ENCODE measurements at regions of chrX and their contacts with region 1.

Region 1: GRCh38 chrX:24693453-24694202 is at the start of gene POLA1:
- DNase-seq: peak; percentile 33 to 81 (median 41)
- ATAC-seq: peak; percentile 97
- H3K4me3 ChIP-seq: peak within 1 kb of the TSS; percentile 78
- H3K4me3 Mint-ChIP-seq: peak within 1 kb of the TSS; percentile 85 to 94 (median 89)
- H3K27ac ChIP-seq: peak within 1 kb of the TSS; percentile 52
- H3K27ac Mint-ChIP-seq: peak within 1 kb of the TSS; percentile 28 to 95 (median 77)
- H3K4me1 ChIP-seq: no peaks in the 10 kb centered on the region
- H3K4me1 Mint-ChIP-seq: peaks cover 0 to 24% (median 13%) of the 10 kb centered on the region in 7 donors
- H3K27me3 ChIP-seq: no peaks in the 10 kb centered on the region
- H3K27me3 Mint-ChIP-seq: no peaks in the 10 kb centered on the region
- total RNA-seq, gene POLA1: 6.4 to 26.6 (median 7.5) TPM

Region 2: DNA sequence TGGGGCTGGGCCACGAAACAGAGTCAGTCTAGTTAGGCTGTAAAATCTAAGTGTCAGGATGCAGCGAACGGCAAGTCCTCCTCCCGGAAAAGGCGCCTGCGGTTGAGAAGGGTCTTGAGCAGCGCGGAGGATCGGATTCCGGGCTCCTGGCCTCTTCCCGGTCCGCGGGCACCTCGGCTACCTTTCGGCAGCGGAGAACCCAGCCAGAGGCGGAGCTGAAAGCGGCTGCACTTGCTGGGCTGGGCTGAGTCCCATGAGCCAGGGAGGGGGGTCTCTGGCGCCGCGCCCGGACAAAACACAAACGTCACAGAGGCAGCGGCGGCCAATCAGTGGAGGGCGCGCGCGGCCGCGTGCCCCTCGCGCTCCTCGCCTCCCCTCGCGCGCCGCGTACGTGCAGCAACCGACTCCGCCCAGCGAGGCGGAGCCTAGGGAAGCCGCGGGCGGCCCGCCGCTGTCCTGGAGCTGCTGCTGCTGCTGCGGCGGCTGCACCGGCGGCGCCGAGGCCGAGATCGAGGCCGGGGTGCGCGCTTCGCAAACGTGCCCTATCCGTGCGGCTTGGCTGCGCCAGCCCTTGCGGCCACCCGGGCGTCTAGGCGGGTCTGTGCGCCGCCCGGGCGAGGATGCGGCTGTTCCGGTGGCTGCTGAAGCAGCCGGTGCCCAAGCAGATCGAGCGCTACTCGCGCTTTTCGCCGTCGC is 228.6 kb before region 1 on chrX and contains the start of gene PDK3:
- CTCF ChIA-PET with region 1: no interaction called
- POLR2A ChIA-PET with region 1: no interaction called
- intact Hi-C with region 1: loop called in 1 of 2 experiments (anchors 5 kb)
- DNase-seq: peak; percentile 81 to 92 (median 89)
- ATAC-seq: peak; percentile 98
- H3K4me3 ChIP-seq: peak within 1 kb of the TSS; percentile 70
- H3K4me3 Mint-ChIP-seq: peak within 1 kb of the TSS; percentile 48 to 90 (median 85)
- H3K27ac ChIP-seq: peak within 1 kb of the TSS; percentile 92
- H3K27ac Mint-ChIP-seq: peak within 1 kb of the TSS; percentile 77 to 97 (median 93)
- H3K4me1 ChIP-seq: peaks cover 14 to 24% of the 10 kb centered on the region in 2 donors
- H3K4me1 Mint-ChIP-seq: peaks cover 7 to 37% (median 33%) of the 10 kb centered on the region in 7 donors
- H3K27me3 ChIP-seq: no peaks in the 10 kb centered on the region
- H3K27me3 Mint-ChIP-seq: no peaks in the 10 kb centered on the region
- total RNA-seq, gene PDK3: 17.4 to 29.4 (median 28.5) TPM

Region 3: GRCh38 chrX:24479924-24480323 is 213.7 kb before region 1 on chrX:
- CTCF ChIA-PET with region 1: no interaction called
- POLR2A ChIA-PET with region 1: no interaction called
- intact Hi-C with region 1: loop called in 1 of 2 experiments (anchors 5 kb)
- DNase-seq: peak in 8 of 9 donors; percentile 46 to 88 (median 82)
- ATAC-seq: peak; percentile 98
- H3K4me3 ChIP-seq: peak overlapping the region; percentile 34
- H3K4me3 Mint-ChIP-seq: peak overlapping the region; percentile 65 to 85 (median 76)
- H3K27ac ChIP-seq: peak overlapping the region; percentile 81
- H3K27ac Mint-ChIP-seq: peak overlapping the region; percentile 91 to 97 (median 95)
- H3K4me1 ChIP-seq: peaks cover 22 to 51% of the 10 kb centered on the region in 2 donors
- H3K4me1 Mint-ChIP-seq: peaks cover 16 to 92% (median 71%) of the 10 kb centered on the region in 7 donors
- H3K27me3 ChIP-seq: no peaks in the 10 kb centered on the region
- H3K27me3 Mint-ChIP-seq: no peaks in the 10 kb centered on the region

Region 4: GRCh38 chrX:24647257-24648058 is 46.2 kb before region 1 on chrX and contains the start of gene PCYT1B:
- CTCF ChIA-PET with region 1: no interaction called
- POLR2A ChIA-PET with region 1: no interaction called
- intact Hi-C with region 1: loop called (anchors 1 kb)
- DNase-seq: peak; percentile 15 to 60 (median 51)
- ATAC-seq: peak; percentile 99
- H3K4me3 ChIP-seq: peak within 1 kb of the TSS; percentile 43
- H3K4me3 Mint-ChIP-seq: peak within 1 kb of the TSS; percentile 72 to 88 (median 82)
- H3K27ac ChIP-seq: no peak within 1 kb of the TSS
- H3K27ac Mint-ChIP-seq: peak within 1 kb of the TSS in 5 of 9 donors; percentile 35 to 87 (median 46)
- H3K4me1 ChIP-seq: peaks cover 0 to 4% of the 10 kb centered on the region in 2 donors
- H3K4me1 Mint-ChIP-seq: peaks cover 2 to 20% (median 12%) of the 10 kb centered on the region in 7 donors
- H3K27me3 ChIP-seq: no peaks in the 10 kb centered on the region
- H3K27me3 Mint-ChIP-seq: peaks cover 7 to 28% (median 8%) of the 10 kb centered on the region in 5 donors
- total RNA-seq, gene PCYT1B: 0.05 to 0.12 TPM in 2 of 5 experiments, not detected in the others